Breast epithelium (tissue), 4 donors: ENCODE measurements at regions of chr10 and their contacts with region 1.

Region 1: GRCh38 chr10:96513698-96514561 is at the start of gene TLL2:
- DNase-seq: peak; percentile 56 to 73
- H3K4me3 ChIP-seq: peak within 1 kb of the TSS; percentile 38 to 69 (median 50)
- H3K27ac ChIP-seq: no peak within 1 kb of the TSS
- H3K4me1 ChIP-seq: peaks cover 0 to 14% of the 10 kb centered on the region in 2 donors
- H3K27me3 ChIP-seq: peaks cover 0 to 6% of the 10 kb centered on the region in 2 donors
- CTCF ChIP-seq: peak; percentile 19 to 41 (median 40)
- POLR2A ChIP-seq: no peak
- total RNA-seq, gene TLL2: under 0.01 TPM in 1 of 3 donors, not detected in the others

Region 2: DNA sequence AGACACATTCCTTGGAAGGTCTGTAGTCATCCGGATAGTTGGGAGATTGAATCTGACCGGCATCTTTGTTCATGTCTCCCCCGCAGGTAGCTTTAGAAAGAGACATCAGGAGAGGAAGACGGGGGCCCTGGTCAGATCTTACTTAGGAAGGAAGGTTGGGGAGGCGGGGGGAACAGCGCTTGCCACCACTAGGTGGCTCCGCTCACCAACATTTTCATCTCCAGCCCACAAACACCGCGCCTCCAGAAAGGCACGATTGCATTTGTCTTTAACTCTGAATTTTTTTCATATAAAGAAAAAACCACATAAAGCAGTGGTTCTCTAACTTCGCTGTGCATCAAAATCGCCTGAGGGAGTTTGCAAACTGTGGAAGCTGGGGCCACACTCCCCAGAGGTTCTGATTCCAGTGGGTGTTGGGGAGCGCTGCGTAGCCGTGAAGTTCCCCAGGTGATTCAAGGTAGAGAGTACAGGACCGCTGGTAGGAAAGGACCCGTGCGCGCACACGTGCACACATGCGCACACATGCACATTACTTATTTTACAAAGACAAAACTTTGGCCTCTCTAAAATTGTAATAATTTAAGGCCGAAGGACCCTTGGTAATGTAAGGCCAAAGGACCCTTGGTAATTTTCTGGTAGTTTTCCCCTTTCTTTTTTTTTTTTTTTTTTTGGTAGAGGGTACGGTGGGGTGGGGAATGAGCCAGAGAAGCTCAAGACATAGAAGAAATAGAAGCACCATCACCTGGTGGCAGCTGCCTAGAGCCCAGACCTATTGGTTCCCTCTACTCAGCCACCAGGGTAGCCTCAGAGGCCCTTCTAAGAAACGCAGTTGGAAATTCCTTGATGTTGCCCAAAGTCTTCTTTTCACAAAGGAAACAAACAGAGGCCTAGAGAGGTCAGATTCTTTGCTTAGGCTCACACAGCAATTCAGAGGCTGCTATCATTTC is 117.7 kb before region 1 on chr10:
- intact Hi-C with region 1: loop called (anchors 5 kb)
- DNase-seq: peak; percentile 56 to 63
- H3K4me3 ChIP-seq: no peak overlapping the region
- H3K27ac ChIP-seq: no peak overlapping the region
- H3K4me1 ChIP-seq: no peaks in the 10 kb centered on the region
- H3K27me3 ChIP-seq: peaks cover 0 to 50% of the 10 kb centered on the region in 2 donors
- CTCF ChIP-seq: peak; percentile 71 to 83 (median 73)
- POLR2A ChIP-seq: no peak

Region 3: GRCh38 chr10:96586419-96587263 is 72.7 kb after region 1 on chr10 and contains the start of gene TM9SF3:
- intact Hi-C with region 1: no loop called
- DNase-seq: peak; percentile 87 to 90
- H3K4me3 ChIP-seq: peak within 1 kb of the TSS; percentile 91 to 98 (median 94)
- H3K27ac ChIP-seq: peak within 1 kb of the TSS; percentile 99 to 100
- H3K4me1 ChIP-seq: peaks cover 0 to 8% of the 10 kb centered on the region in 2 donors
- H3K27me3 ChIP-seq: no peaks in the 10 kb centered on the region
- CTCF ChIP-seq: no peak
- POLR2A ChIP-seq: no peak
- total RNA-seq, gene TM9SF3: 95.7 to 118 (median 116) TPM